HEK293 (cell line): ENCODE measurements at regions of chr2 and their contacts with region 1.

Region 1: GRCh38 chr2:86440631-86441391 is at the start of gene KDM3A:
- H3K4me3 ChIP-seq: peak within 1 kb of the TSS; percentile 87
- H3K27ac ChIP-seq: peak within 1 kb of the TSS; percentile 93
- H3K4me1 ChIP-seq: no peaks in the 10 kb centered on the region
- CTCF ChIP-seq: peak; percentile 28; the same call in 1 of the 2 replicates

Region 2: DNA sequence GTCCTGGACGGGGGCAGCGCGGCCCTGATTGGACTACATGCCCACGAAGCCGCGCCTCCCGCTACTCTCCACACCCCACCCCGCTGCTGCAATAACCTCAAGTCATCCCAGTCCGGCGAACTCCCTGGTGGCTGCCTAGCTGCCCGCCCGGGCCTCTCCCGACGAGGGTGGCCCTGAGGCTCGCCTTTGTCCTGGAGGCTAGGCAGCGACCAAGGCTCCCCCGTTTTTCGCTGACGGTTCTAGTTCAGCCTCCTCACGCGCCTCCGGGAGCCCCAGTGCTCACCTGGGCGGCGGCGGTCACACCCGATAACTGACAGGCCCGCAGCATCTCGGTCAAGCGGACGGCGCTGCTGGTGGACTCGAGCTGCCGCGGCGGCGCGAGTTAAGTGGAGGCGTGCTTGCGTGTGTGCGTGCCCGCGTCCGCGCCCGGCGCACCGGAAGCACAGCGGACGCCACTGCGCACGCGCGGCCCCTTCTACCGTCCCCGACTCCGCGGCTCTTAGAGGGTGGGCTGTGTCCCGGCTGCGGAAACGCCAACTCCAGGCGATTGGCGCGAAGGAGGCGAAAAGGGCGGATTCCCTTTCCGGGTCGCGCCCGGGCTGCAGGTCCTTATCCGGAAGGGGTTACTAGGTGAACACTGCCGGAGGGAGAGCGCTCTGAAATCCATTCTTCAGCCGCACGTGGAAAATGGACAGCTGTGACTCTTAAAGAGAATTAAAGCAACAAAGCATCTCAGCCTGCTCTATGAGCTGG is 245.6 kb before region 1 on chr2 and contains the start of gene IMMT:
- CTCF ChIA-PET with region 1: no interaction called
- POLR2A ChIA-PET with region 1: interaction called, 14 read pairs
- H3K4me3 ChIP-seq: peak within 1 kb of the TSS; percentile 99
- H3K27ac ChIP-seq: peak within 1 kb of the TSS; percentile 97
- H3K4me1 ChIP-seq: peaks cover 8% of the 10 kb centered on the region; the same call in 1 of the 2 replicates
- CTCF ChIP-seq: peak; percentile 26; the same call in 1 of the 2 replicates

Region 3: GRCh38 chr2:86393521-86394491 is 47.0 kb before region 1 on chr2:
- CTCF ChIA-PET with region 1: interaction called, 5 read pairs
- POLR2A ChIA-PET with region 1: interaction called, 10 read pairs
- H3K4me3 ChIP-seq: no peak overlapping the region
- H3K27ac ChIP-seq: no peak overlapping the region
- H3K4me1 ChIP-seq: peaks cover 7% of the 10 kb centered on the region; the same call in 1 of the 2 replicates
- CTCF ChIP-seq: no peak

Region 4: DNA sequence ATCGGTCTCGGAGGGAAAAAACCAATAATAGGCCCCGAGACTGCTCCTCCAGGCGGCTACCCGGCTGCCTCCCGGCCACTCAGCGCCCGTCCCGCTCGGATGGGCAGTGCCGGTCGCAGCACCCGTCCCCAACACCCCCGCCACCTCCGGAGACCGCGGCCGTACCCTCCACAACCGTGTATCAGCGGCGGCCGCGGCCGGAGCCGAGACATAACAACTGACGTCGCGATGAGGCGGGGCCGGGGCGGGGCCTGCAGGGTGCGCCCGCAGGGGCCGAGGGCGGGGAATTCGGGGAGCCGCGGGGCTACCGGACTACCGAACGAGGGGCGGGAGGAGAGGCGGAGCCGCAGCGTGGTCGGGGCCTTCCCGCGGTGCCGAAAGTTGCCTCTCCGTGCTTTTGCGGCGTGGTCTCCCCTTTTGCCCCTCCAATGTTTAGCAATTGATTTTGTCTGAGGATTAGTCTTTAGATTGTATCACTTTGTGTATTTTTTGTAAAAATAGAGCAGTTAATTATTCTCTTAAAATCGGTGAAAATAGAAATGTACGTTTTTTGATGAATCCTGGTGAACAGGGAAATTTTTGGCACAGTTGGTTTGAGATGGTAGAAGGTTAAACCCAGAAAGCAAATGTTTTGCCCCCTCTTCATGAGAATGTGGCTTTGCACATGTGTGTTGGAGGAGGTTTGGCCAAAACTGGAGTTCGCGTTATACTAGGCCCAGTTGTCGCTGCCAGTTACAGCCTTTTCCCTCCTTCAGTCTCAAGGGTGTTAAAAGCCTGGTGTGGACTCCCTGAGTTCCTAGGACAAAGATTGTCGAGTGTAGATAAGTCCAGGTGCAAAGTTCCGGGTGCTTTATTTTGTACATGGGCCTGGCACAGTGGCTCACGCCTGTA is 183.1 kb after region 1 on chr2 and contains the start of gene RNF103:
- CTCF ChIA-PET with region 1: no interaction called
- POLR2A ChIA-PET with region 1: interaction called, 18 read pairs
- H3K4me3 ChIP-seq: peak within 1 kb of the TSS; percentile 74
- H3K27ac ChIP-seq: peak within 1 kb of the TSS; percentile 94
- H3K4me1 ChIP-seq: no peaks in the 10 kb centered on the region
- CTCF ChIP-seq: no peak